ENCODE measurements at regions of chr11 and their contacts with region 1.

Region 1: DNA sequence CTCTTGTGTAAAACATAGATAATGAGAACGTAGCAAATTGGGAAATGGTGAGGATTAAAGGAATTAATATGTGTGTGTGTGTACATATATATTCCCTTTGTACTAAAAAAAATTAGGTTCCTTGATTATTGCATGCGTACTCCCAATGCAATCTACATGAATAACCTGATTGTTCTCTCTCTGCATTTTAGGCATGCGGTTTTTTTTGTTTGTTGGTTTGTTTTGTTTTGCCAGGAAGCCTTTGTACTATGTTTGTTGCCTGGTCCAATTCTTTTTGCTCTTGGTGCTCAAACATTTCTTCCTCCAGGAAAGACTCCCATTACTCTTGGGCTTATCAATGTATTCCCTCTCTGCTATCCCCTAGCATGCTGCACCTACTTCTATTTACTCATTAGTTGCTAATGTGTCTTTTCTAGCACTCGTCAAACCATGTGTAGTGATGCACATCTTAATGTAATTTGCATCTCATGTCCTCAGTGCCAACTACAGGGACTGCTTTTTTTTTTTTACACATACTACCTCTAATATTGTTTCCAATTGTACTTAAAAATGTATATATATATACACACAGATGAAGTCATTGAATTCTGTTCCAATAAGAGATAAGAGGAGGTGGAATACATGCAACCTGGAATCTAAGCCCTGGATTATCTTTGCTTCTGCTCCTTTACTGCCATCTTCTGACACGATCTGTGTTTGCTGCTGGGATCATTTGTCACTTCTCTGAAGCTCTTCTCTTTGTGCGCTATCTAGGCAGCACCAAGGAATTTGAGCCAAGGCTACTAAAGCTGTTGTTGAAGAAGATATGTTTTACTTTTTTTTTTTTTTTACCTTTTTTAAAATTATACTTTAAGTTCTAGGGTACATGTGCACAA is 197.2 kb upstream of the ANO3 start:
- DNase-seq: no peak
- ATAC-seq: peak; percentile 37
- H3K4me3 Mint-ChIP-seq: no peak overlapping the region
- H3K27ac Mint-ChIP-seq: no peak overlapping the region
- H3K4me1 Mint-ChIP-seq: peaks cover 20% of the 10 kb centered on the region
- H3K27me3 Mint-ChIP-seq: no peaks in the 10 kb centered on the region
- CTCF ChIP-seq: no peak

Region 2: DNA sequence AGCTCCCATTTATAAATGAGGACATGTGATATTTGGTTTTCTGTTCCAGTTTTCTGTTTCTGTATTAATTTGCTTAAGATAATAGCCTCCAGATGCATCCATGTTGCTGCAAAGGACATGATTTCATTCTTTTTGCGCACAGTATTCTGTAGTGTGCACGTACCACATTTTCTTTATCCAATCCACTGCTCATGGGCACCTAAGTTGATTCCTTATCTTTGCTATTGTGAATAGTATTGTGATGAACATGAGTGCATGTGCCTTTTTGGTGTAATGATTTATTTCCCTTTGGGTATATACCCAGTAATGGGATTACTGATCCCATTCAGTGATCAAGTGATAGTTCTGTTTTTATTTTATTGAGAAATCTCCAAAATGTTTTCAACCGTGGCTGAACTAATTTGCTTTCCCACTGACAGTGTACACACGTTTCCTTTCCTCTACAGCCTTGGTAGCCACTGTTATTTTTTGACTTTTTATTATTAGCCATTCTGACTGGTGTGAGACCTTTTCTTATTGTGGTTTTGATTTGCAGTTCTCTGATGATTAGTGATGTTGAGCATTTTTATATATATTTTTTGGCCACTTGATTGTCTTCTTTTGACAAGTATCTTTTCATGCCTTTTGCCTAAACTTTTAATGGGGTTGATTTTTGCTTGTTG is 28.8 kb before region 1 on chr11:
- CTCF ChIA-PET with region 1: no interaction called
- POLR2A ChIA-PET with region 1: no interaction called
- intact Hi-C with region 1: no loop called
- DNase-seq: no peak
- ATAC-seq: no peak
- H3K4me3 Mint-ChIP-seq: peak overlapping the region; percentile 8
- H3K27ac Mint-ChIP-seq: peak overlapping the region; percentile 43
- H3K4me1 Mint-ChIP-seq: peaks cover 16% of the 10 kb centered on the region
- H3K27me3 Mint-ChIP-seq: no peaks in the 10 kb centered on the region
- CTCF ChIP-seq: no peak

Region 3: GRCh38 chr11:26227296-26227695 is 92.6 kb after region 1 on chr11:
- CTCF ChIA-PET with region 1: no interaction called
- POLR2A ChIA-PET with region 1: no interaction called
- intact Hi-C with region 1: loop called (anchors 2 kb)
- DNase-seq: no peak
- ATAC-seq: peak; percentile 62
- H3K4me3 Mint-ChIP-seq: no peak overlapping the region
- H3K27ac Mint-ChIP-seq: no peak overlapping the region
- H3K4me1 Mint-ChIP-seq: peaks cover 4% of the 10 kb centered on the region
- H3K27me3 Mint-ChIP-seq: no peaks in the 10 kb centered on the region
- CTCF ChIP-seq: no peak

Region 4: GRCh38 chr11:26276798-26277424 is 142.2 kb after region 1 on chr11:
- CTCF ChIA-PET with region 1: no interaction called
- POLR2A ChIA-PET with region 1: no interaction called
- intact Hi-C with region 1: loop called (anchors 10 kb)
- DNase-seq: no peak
- ATAC-seq: peak; percentile 79
- H3K4me3 Mint-ChIP-seq: no peak overlapping the region
- H3K27ac Mint-ChIP-seq: no peak overlapping the region
- H3K4me1 Mint-ChIP-seq: no peaks in the 10 kb centered on the region
- H3K27me3 Mint-ChIP-seq: peaks cover 2% of the 10 kb centered on the region
- CTCF ChIP-seq: peak; percentile 94